ENCODE measurements at regions of chr2 and their contacts with region 1.

Region 1: GRCh38 chr2:20595431-20596192 is 55.3 kb downstream of the HS1BP3 start:
- DNase-seq: peak; percentile 75
- ATAC-seq: peak; percentile 84
- H3K4me3 ChIP-seq: peak overlapping the region in 3 of 5 experiments; percentile 13 to 40 (median 39)
- H3K4me3 Mint-ChIP-seq: peak overlapping the region; percentile 83
- H3K27ac ChIP-seq: peak overlapping the region in 1 of 2 donors; percentile 50
- H3K27ac Mint-ChIP-seq: peak overlapping the region; percentile 74
- H3K4me1 ChIP-seq: peaks cover 37 to 45% of the 10 kb centered on the region in 2 donors
- H3K4me1 Mint-ChIP-seq: peaks cover 50% of the 10 kb centered on the region
- H3K27me3 ChIP-seq: peaks cover 0 to 14% (median 6%) of the 10 kb centered on the region in 4 experiments
- H3K27me3 Mint-ChIP-seq: peaks cover 24% of the 10 kb centered on the region
- CTCF ChIP-seq: no peak

Region 2: DNA sequence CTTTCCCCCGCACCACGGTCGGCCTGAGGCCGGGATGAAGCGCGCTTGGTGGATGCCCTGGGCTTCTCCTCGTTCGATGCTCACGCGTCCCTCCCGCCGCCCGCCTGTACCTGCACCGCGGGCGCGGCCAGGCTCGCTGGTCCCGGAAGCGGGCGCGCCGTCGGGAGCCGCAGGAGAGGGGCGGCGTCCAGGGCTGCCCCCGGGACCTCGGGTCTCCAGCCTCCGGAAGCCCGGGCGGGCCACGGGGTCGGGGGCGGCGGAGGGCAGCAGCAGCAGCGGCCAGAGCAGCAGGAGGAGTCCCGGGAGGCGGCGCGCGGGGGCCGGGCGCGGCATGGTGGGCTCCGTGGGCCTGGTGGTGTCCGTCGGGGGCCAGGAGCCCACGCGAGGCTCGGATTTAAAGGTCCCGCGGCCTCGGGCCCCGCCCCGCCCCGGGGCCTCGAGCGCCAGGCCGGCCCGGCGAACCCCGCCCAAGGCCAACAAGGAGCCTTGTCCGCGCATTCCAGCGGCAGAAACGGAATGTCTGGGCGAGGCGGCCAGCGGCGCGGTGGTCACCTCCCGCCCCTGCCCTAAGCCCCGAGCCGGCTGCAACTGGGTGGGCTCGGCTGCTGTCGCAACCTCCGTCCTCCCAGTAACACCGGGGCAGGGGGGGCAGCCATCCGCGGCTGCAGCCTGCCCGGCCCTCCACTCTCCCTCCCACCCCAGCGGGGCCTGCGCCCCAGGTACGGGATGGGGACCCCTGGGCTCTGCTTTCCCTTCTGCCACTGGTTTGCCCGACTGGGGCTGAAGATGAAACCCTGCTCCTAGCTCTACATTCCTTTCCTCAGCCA is 583.1 kb before region 1 on chr2 and contains the start of gene MATN3:
- CTCF ChIA-PET with region 1: no interaction called
- POLR2A ChIA-PET with region 1: no interaction called
- intact Hi-C with region 1: no loop called
- DNase-seq: peak; percentile 41
- ATAC-seq: peak; percentile 47
- H3K4me3 ChIP-seq: peak within 1 kb of the TSS in 4 of 5 experiments; percentile 23 to 62 (median 52)
- H3K4me3 Mint-ChIP-seq: peak within 1 kb of the TSS; percentile 83
- H3K27ac ChIP-seq: no peak within 1 kb of the TSS
- H3K27ac Mint-ChIP-seq: no peak within 1 kb of the TSS
- H3K4me1 ChIP-seq: peaks cover 11 to 18% of the 10 kb centered on the region in 2 donors
- H3K4me1 Mint-ChIP-seq: peaks cover 11% of the 10 kb centered on the region
- H3K27me3 ChIP-seq: peaks cover 0 to 33% (median 23%) of the 10 kb centered on the region in 4 experiments
- H3K27me3 Mint-ChIP-seq: peaks cover 55% of the 10 kb centered on the region
- CTCF ChIP-seq: no peak
- total RNA-seq, gene MATN3: not detected in 2 replicates

Region 3: DNA sequence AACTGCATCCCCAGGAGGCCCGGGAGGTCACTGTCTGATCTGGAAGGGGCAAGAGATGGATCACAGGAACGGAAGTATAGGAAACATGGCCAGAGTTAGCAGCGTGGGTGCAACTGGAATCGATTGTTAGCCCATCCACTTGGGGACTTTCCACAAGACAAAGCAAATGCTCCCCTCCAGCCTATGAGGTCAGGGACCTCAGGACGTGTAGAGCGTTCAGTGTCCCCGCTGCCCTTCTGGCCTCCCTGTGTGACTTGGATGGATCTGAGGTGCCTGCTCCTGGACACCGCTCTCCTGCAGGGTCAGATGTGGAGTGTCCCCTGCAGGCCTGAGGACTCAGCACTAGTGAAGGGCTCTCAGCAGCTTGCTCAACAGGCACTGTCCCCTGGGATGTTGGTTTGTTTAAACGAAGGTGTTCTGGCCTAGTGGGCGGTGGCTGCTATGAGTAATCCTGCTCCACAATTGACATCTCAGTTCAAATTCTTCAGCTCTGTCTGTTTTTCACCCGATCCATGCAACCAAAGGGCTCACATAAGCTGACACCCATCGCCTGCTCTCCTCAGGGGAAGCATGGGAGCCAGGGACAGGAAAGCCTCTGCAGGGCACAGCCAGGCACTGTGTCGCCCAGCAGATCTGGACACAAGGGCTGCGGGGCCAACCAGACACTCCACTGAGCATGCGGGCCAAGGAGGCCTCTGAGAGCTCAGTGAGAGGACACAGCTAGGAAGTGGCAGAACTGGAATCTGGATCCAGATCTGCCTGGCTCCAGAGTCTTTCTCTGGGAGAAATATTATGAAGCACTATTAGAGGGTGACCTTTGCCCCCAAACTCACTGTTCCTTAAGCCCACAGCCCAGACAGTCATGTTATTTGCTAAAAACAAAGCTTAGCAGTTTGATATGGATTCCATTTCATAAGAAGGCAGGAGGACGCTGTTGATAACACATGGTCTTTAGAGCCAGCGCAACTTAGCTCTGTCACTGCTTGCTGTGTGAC is 70.3 kb before region 1 on chr2:
- CTCF ChIA-PET with region 1: no interaction called
- POLR2A ChIA-PET with region 1: no interaction called
- intact Hi-C with region 1: loop called (anchors 1 kb)
- DNase-seq: no peak
- ATAC-seq: peak; percentile 84
- H3K4me3 ChIP-seq: peak overlapping the region in 3 of 5 experiments; percentile 15 to 44 (median 34)
- H3K4me3 Mint-ChIP-seq: peak overlapping the region; percentile 84
- H3K27ac ChIP-seq: no peak overlapping the region
- H3K27ac Mint-ChIP-seq: peak overlapping the region; percentile 77
- H3K4me1 ChIP-seq: peaks cover 15 to 17% of the 10 kb centered on the region in 2 donors
- H3K4me1 Mint-ChIP-seq: peaks cover 28% of the 10 kb centered on the region
- H3K27me3 ChIP-seq: peaks cover 0 to 9% (median 0%) of the 10 kb centered on the region in 4 experiments
- H3K27me3 Mint-ChIP-seq: peaks cover 5% of the 10 kb centered on the region
- CTCF ChIP-seq: no peak

Region 4: DNA sequence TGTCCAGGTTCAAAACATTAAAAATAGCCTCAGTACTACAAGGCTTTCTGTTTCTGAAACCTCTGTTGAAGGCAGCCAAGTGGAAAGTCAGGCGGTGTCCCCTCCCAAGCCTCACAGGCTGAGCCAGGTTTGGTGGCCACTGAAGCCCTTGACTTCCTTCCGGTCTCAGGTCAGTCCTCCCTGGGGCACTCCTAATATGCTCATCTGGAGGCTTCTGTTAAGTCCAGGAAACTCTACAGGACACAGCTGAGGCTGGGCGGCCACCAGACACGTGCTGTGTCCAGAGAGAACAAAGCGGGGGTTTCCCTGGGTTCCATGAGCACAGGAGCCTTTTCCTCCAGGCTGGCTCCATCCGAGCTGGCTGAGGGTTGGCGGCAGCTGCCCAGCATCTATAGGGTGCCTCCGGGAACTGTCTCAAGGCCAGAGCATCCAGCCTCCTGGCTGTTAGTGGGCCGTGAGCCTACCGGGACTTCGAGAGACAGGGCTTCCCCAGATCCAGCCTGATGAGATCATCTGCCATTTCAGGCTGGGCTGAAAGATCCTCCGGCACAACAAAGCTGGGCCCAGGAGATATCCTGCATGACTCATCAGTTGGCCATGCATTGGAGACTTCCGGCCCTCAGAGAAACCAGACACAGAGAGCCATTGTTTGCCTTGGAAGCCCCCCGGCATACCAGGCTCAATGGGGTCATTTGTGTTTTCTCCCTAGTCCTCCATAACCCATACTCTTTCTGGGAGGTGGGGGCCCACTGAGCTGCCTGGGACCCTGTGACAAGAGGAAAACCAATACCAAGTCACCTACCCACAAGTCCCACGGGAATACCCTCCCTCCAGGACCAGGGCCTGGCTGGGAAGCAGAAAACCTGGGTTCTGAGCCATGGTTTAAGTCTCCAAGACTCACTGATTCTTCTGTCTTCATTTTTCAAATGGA is 16.5 kb before region 1 on chr2:
- CTCF ChIA-PET with region 1: no interaction called
- POLR2A ChIA-PET with region 1: no interaction called
- intact Hi-C with region 1: loop called (anchors 1 kb)
- DNase-seq: no peak
- ATAC-seq: no peak
- H3K4me3 ChIP-seq: no peak overlapping the region
- H3K4me3 Mint-ChIP-seq: no peak overlapping the region
- H3K27ac ChIP-seq: no peak overlapping the region
- H3K27ac Mint-ChIP-seq: no peak overlapping the region
- H3K4me1 ChIP-seq: peaks cover 27 to 34% of the 10 kb centered on the region in 2 donors
- H3K4me1 Mint-ChIP-seq: peaks cover 23% of the 10 kb centered on the region
- H3K27me3 ChIP-seq: no peaks in the 10 kb centered on the region
- H3K27me3 Mint-ChIP-seq: no peaks in the 10 kb centered on the region
- CTCF ChIP-seq: no peak